ENCODE measurements at regions of chr2 and their contacts with region 1.

Region 1: DNA sequence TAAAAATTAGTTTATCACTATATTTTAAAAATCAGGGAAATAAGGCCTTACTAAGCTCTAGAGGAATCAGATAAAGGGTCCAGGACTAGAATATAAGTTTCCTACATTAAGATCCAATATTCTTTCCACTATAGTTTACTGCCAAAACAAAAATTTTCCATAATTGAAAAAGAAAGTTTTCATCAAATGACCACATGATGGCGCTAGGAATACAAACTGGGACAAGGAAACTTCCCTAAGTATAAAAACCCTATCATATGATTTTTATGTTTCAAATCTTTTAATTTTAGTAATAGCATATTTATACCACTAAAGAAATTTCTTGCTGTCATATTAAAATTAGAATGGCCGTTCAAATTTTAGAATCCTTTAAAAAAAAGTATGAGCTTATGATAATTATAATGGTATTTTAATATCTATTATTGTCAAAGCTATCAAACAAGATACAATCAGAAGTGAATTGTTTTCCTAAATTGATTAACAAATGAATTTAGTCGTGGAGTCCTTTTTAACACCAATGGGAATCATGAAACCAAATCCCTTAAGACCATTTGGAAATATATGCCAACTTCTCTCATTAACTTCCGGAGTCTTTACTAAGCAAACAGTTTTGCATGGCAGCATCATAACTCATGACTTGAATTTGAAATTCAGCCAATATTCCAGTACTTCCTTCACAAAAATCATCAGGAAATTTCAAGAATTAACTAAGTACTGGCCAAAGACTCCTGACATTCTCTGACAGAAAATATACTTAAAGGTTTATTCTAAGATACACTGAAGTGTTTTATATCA is 70.3 kb downstream of the SCN1A start:
- DNase-seq: no peak
- ATAC-seq: no peak

Region 2: DNA sequence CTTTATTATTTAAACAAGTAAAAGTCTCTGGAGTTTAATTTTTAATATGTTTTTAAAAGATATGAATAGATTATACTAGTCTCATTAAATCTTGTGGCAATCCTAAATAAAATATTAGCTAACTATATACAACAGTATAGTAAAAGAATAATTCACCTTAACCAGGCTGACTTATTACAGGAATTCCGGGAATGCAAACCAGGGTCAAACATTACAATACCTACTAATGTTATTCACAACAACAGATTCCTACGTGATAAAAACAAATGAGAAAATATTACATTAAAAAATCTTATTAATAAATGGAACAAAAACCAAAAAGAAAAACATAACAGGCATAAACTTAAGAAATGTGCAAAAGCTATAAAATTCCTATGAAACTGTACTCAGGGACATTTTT is 124.4 kb before region 1 on chr2:
- intact Hi-C with region 1: no loop called
- DNase-seq: no peak
- ATAC-seq: no peak

Region 3: DNA sequence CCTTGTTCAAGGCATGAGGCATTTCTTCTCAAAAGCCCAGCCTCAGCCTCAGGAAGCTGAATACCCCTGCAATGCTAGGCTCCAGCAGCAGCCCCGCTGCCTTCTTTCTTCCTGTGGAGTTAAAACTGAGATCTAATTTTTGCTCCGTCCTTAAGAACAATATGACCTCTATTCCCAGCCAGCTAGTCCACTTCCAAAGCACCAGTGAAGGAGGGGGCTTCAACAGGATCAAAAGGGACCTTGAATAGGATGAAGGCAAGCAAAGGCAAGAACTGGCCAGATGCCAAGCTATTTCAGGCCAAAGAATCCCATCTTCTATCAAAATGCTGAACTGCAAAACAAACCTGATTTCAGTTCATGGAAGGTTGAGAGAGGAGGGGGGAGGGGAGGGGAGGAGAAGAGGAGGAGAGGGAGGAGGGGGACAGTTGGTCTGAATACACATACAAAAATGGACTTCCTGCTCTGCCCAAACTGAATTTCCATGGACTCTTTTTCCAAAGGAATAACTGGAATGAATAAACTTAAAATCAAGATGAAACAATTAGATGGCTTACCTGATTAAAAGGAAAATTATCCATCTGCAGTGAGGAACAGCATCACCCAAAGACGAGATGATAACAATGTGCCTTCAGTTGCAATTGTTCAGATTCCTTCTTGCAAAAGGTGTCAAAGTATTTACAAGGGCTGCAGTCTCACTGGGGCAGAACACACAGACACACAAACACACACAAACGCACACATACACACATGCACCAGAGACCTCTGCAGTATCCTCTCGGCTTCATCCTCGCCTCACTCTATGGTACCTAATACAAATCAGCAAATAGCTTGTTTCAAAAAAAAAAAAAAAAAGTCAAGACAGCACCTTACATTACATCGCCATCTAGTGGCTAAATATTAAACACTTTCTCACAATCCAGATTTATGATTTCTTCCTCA is 69.9 kb after region 1 on chr2 and contains the start of gene SCN1A:
- intact Hi-C with region 1: loop called (anchors 2 kb)
- DNase-seq: peak; percentile 25
- ATAC-seq: no peak
- total RNA-seq, gene SCN1A: 0.38 TPM

Region 4: GRCh38 chr2:166170356-166170755 is 112.8 kb after region 1 on chr2:
- intact Hi-C with region 1: no loop called
- DNase-seq: no peak
- ATAC-seq: no peak

Region 5: GRCh38 chr2:166180951-166181812 is 123.6 kb after region 1 on chr2:
- intact Hi-C with region 1: loop called (anchors 5 kb)
- DNase-seq: peak; percentile 68
- ATAC-seq: no peak